CD8-positive, alpha-beta memory T cell (primary cell): ENCODE measurements at regions of chr1 and their contacts with region 1.

Region 1: GRCh38 chr1:35505908-35506798 is 51.0 kb downstream of the KIAA0319L start:
- DNase-seq: peak; percentile 29 to 78 (median 39)
- H3K4me3 ChIP-seq: peak overlapping the region; percentile 10
- H3K4me3 Mint-ChIP-seq: peak overlapping the region; percentile 22 to 80 (median 74)
- H3K27ac ChIP-seq: peak overlapping the region; percentile 48
- H3K27ac Mint-ChIP-seq: peak overlapping the region; percentile 67 to 99 (median 94)
- H3K4me1 ChIP-seq: peaks cover 45% of the 10 kb centered on the region
- H3K4me1 Mint-ChIP-seq: peaks cover 55 to 83% (median 79%) of the 10 kb centered on the region in 3 donors
- H3K27me3 ChIP-seq: no peaks in the 10 kb centered on the region
- H3K27me3 Mint-ChIP-seq: no peaks in the 10 kb centered on the region

Region 2: DNA sequence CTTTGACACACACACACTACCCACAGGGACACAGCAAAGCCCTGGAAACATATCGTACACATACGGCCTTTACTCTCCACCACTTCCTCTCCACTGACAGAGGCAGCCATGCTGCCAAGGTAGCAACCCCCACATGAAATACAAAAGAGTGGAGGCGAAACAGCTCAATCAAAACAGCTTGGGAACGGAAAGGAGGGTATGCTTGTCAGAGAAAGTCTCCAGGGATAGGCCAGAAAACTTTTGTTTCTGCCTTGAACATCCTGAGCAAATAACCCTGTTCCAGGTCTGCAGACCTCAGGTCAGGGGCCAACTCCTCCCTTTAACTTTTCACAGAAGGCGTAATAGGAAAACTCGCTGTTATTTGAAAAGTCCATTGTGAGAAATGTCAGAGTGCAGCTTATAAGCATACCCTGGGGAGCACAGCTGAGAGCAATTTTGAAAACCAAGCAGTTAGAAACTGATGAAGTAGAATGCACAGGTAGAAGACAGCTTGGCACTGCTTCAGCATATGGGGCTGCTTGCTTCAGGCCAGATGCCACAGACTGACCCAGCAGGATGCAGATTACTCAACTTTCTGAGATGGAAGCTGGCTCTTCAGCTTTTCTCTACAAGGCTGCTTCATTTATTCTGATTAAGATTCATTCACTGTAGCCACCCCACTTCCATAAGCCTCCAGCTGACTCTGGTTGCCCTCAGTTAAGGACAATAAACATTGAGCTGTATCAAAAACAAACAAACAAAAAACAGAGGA is 33.1 kb after region 1 on chr1:
- CTCF ChIA-PET with region 1: interaction called, 8 read pairs
- POLR2A ChIA-PET with region 1: interaction called, 15 read pairs
- DNase-seq: peak in 3 of 5 donors; percentile 52 to 79 (median 69)
- H3K4me3 ChIP-seq: peak overlapping the region; percentile 27
- H3K4me3 Mint-ChIP-seq: peak overlapping the region; percentile 61 to 85 (median 77)
- H3K27ac ChIP-seq: no peak overlapping the region
- H3K27ac Mint-ChIP-seq: peak overlapping the region; percentile 68 to 98 (median 93)
- H3K4me1 ChIP-seq: peaks cover 56% of the 10 kb centered on the region
- H3K4me1 Mint-ChIP-seq: peaks cover 68 to 91% (median 83%) of the 10 kb centered on the region in 3 donors
- H3K27me3 ChIP-seq: no peaks in the 10 kb centered on the region
- H3K27me3 Mint-ChIP-seq: no peaks in the 10 kb centered on the region

Region 3: DNA sequence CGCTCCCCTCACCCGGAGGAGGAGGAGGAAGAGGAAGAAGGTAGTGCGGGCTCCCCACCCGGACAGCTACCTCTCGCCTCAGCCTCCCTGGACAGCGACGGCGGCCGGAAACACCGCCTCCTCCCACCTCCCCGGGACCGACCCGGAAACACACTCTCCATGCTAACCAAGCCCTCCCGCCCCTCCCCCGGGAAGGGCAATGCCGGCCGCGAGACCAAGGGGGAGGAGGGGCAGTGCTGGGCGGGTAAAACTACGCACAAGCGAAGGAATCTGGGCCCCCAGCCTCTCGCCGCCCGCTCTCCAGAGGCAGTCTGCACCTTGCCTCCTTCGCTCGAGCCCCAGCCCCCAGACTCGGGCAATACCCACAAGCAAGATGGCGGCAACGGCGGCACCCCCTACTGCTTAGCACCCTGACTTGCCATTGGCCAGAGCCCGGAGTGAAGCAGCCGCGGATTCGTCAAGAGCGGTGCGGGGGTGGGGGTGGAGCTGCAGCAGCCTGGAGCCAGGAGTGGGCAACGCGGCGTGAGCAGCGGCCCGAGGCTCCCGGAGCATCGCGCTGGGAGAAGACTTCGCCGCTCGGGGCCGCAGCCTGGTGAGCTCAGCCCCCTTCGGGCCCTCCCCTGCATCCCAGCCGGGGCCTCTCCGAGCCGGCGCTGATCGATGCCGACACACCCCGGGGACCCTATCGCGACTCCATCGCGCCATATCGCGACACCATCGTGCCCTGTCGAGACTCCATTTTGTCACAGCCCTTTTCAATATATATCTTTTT is 51.3 kb after region 1 on chr1 and contains the starts of genes KIAA0319L and NCDN:
- CTCF ChIA-PET with region 1: interaction called, 4 read pairs
- POLR2A ChIA-PET with region 1: interaction called, 13 read pairs
- DNase-seq: peak; percentile 93 to 97 (median 93)
- H3K4me3 ChIP-seq: peak within 1 kb of the TSS; percentile 71
- H3K4me3 Mint-ChIP-seq: peak within 1 kb of the TSS; percentile 94 to 100 (median 97)
- H3K27ac ChIP-seq: peak within 1 kb of the TSS; percentile 83
- H3K27ac Mint-ChIP-seq: peak within 1 kb of the TSS; percentile 91 to 99 (median 96)
- H3K4me1 ChIP-seq: peaks cover 31% of the 10 kb centered on the region
- H3K4me1 Mint-ChIP-seq: peaks cover 51 to 76% (median 70%) of the 10 kb centered on the region in 3 donors
- H3K27me3 ChIP-seq: no peaks in the 10 kb centered on the region
- H3K27me3 Mint-ChIP-seq: no peaks in the 10 kb centered on the region
- total RNA-seq, gene KIAA0319L: 28.5 to 30.4 TPM
- total RNA-seq, gene NCDN: 49.0 to 50.4 TPM

Region 4: GRCh38 chr1:35564037-35564883 is 58.1 kb after region 1 on chr1:
- CTCF ChIA-PET with region 1: interaction called, 12 read pairs
- POLR2A ChIA-PET with region 1: no interaction called
- DNase-seq: peak; percentile 58 to 84 (median 70)
- H3K4me3 ChIP-seq: no peak overlapping the region
- H3K4me3 Mint-ChIP-seq: peak overlapping the region in 1 of 7 donors; percentile 29
- H3K27ac ChIP-seq: no peak overlapping the region
- H3K27ac Mint-ChIP-seq: peak overlapping the region in 7 of 8 donors; percentile 16 to 82 (median 58)
- H3K4me1 ChIP-seq: peaks cover 2% of the 10 kb centered on the region
- H3K4me1 Mint-ChIP-seq: peaks cover 17 to 43% (median 34%) of the 10 kb centered on the region in 3 donors
- H3K27me3 ChIP-seq: no peaks in the 10 kb centered on the region
- H3K27me3 Mint-ChIP-seq: no peaks in the 10 kb centered on the region